ENCODE measurements at regions of chr10 and their contacts with region 1.

Region 1: DNA sequence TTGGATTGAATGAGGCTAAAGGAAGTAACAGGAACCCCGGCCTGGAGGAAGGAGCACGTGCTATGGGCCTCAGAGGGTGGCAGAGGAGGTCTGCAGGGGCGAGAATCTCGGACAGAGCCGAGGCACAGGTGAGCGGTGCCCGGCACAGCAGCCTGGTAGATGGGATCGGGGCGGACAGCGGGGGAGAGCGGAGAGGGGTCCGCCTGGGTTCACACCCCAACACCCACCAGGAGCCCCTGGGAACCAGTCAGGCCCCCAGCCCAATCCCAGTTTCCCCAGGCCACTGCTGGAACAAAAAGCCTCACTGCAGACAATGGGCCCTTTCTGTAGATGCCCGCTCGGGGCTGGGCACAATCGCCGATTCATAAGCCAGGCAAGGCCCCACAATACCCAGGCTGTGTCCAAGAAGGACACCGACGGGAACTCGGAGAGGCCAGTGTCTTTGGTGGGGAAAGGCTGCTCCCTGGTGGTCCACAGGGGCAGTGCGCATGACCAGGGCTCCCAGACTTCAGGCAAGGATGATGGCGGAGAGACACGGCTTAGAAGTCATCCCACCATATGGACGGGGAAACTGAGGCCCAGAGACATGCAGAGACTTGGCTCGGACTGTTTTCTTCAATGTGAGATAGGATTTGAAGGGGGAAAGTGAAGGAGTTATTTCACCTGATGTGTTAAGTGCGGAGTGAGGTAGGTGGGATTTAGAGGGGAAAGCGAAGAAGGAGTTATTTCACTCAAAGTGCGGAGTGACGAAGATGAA is 106.9 kb upstream of the GPR26 start:
- DNase-seq: peak; percentile 90
- H3K4me3 ChIP-seq: no peak overlapping the region
- H3K27ac ChIP-seq: no peak overlapping the region
- H3K4me1 ChIP-seq: peaks cover 0 to 5% (median 0%) of the 10 kb centered on the region in 6 donors
- H3K27me3 ChIP-seq: peaks cover 0 to 59% (median 0%) of the 10 kb centered on the region in 7 donors
- CTCF ChIP-seq: peak; percentile 95 to 99 (median 97)
- POLR2A ChIP-seq: no peak

Region 2: GRCh38 chr10:123043409-123043925 is 515.8 kb before region 1 on chr10:
- intact Hi-C with region 1: loop called (anchors 5 kb)
- DNase-seq: no peak
- H3K4me3 ChIP-seq: no peak overlapping the region
- H3K27ac ChIP-seq: no peak overlapping the region
- H3K4me1 ChIP-seq: peaks cover 0 to 12% (median 0%) of the 10 kb centered on the region in 6 donors
- H3K27me3 ChIP-seq: no peaks in the 10 kb centered on the region
- CTCF ChIP-seq: peak in 10 of 11 experiments; percentile 39 to 71 (median 55)
- POLR2A ChIP-seq: no peak

Region 3: DNA sequence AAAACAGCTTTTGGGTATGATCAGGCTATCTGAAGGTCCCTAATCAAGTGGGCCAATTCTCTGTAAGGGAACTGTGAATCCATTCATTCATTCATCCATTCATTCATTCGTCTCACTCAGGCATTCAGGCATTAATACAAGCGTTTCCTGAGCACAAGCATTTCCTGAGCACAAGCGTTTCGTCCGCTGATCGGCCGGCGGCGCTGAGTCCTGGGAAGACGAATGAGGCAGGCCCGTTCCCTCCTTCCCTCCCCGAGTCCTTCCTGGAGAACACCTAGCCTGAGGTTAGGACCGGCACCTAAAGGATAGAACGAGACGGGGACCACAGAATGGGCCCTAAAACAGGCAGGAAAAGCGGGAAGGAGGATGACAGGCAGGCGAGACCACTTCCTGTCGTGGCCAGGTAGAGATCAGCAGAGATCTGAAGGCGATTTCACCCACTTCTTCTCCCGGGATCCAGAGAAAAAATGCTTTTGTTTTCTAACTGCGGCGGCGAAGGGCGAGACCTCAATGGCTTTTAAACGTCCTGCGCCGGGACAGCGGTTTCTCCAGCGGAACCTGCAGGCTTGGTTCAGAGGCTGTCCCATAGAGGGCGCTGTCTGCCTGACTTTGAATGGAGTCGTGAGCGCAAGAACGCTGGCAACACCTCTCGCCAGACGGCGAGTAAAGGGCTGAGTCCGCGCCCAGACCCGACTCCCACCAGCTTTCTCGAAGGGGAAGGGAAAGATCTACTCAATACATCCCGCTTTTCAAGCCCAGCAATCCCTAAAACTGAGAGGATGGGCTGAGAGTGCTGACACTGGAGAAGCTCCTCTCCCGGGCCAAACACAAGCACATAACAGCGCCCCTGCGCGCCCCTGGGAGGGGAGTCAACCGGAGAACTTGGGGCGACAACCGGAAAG is 426.4 kb before region 1 on chr10:
- intact Hi-C with region 1: loop called (anchors 2 kb)
- DNase-seq: peak; percentile 92
- H3K4me3 ChIP-seq: peak overlapping the region in 6 of 8 donors; percentile 9 to 47 (median 14)
- H3K27ac ChIP-seq: no peak overlapping the region
- H3K4me1 ChIP-seq: peaks cover 40 to 57% (median 54%) of the 10 kb centered on the region in 6 donors
- H3K27me3 ChIP-seq: peaks cover 43 to 100% (median 91%) of the 10 kb centered on the region in 7 donors
- CTCF ChIP-seq: peak; percentile 73 to 94 (median 88)
- POLR2A ChIP-seq: no peak